Posterior cingulate gyrus (tissue), 11 donors: ENCODE measurements at regions of chr9 and their contacts with region 1.

Region 1: GRCh38 chr9:113807173-113808061 is 68.7 kb upstream of the ZNF618 start:
- DNase-seq: peak in 5 of 10 donors; percentile 14 to 50 (median 47)

Region 2: GRCh38 chr9:113876151-113876992 is 69.0 kb after region 1 on chr9 and contains the start of gene ZNF618:
- intact Hi-C with region 1: loop called (anchors 5 kb)
- DNase-seq: peak in 4 of 10 donors; percentile 7 to 85 (median 65)

Region 3: GRCh38 chr9:113913426-113914195 is 106.2 kb after region 1 on chr9:
- intact Hi-C with region 1: no loop called
- DNase-seq: no peak

Region 4: GRCh38 chr9:114033397-114034103 is 226.1 kb after region 1 on chr9:
- intact Hi-C with region 1: loop called (anchors 2 kb)
- DNase-seq: peak in 5 of 10 donors; percentile 30 to 90 (median 59)

Region 5: GRCh38 chr9:114304416-114305188 is 497.2 kb after region 1 on chr9:
- intact Hi-C with region 1: loop called (anchors 5 kb)
- DNase-seq: peak in 3 of 10 donors; percentile 7 to 52 (median 35)